ENCODE measurements at regions of chr17 and their contacts with region 1.

Region 1: DNA sequence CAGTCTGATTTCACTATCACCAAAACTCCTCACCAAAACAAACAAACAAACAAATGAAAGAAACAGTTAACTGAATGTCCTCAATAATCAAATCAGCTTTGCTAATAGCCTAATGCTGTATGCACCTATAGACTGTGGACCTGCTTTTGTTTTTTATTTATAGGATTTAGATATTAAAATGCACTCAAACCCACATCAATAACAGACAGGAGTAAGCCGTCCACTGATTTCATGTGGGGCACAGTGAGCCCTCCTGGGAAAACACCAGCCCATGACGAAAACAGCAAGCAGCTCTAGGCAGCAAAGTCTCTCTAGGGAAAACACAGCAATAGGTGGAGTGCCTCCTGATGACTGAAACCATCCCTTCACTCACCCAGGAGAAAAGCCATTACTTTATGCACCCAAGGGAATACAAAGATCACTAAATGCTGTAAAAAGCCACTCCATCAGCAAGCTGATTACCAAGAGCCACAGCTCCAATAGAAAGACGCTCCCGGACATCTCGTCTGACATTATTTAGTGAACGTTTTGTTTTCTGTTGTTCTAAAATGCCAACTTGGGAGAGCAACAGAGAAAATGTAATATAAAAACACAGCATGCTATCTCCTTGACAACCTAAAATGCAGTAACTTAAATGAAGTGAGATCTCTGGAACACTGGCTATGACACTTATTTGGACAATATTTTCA is 47.8 kb downstream of the ANKFY1 start:
- DNase-seq: no peak
- ATAC-seq: no peak
- H3K4me3 ChIP-seq: no peak overlapping the region
- H3K27ac ChIP-seq: no peak overlapping the region
- H3K4me1 ChIP-seq: no peaks in the 10 kb centered on the region
- H3K27me3 ChIP-seq: no peaks in the 10 kb centered on the region
- CTCF ChIP-seq: no peak
- POLR2A ChIP-seq: no peak

Region 2: DNA sequence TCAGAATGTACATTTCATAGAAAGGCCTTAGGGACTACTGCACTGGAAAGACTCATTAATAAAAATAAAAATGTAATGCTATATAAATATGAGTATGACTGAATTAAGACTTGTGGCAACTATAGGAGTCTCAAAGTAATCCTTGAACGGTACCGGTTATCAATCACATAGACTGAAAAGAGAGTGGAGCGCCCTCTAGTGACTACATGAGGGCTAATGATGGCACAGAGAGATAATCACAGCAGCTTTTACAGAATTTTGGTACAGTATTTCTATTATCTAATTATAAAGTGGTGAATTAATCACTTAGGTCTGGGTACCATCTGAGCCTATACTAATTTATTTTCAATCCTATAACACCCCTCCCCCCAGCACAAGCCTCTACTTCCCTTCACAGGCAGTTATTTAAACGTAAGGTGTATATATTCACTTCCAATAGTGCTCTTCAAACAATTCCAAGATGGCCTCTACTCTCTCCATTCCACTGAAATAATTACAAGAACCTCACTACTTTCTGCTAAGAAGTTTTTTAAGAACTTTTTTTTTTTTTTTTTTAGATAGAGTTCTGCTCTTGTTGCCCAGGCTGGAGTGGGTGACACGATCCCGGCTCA is 88.5 kb after region 1 on chr17:
- intact Hi-C with region 1: loop called (anchors 10 kb)
- DNase-seq: peak; percentile 42 to 62 (median 49)
- ATAC-seq: peak; percentile 71
- H3K4me3 ChIP-seq: no peak overlapping the region
- H3K27ac ChIP-seq: no peak overlapping the region
- H3K4me1 ChIP-seq: peaks cover 15% of the 10 kb centered on the region
- H3K27me3 ChIP-seq: no peaks in the 10 kb centered on the region
- CTCF ChIP-seq: peak; percentile 26 to 66 (median 55)
- POLR2A ChIP-seq: no peak

Region 3: GRCh38 chr17:4417129-4417667 is 201.2 kb after region 1 on chr17:
- intact Hi-C with region 1: loop called (anchors 5 kb)
- DNase-seq: no peak
- ATAC-seq: no peak
- H3K4me3 ChIP-seq: no peak overlapping the region
- H3K27ac ChIP-seq: no peak overlapping the region
- H3K4me1 ChIP-seq: peaks cover 4% of the 10 kb centered on the region
- H3K27me3 ChIP-seq: no peaks in the 10 kb centered on the region
- CTCF ChIP-seq: no peak
- POLR2A ChIP-seq: no peak